WTC11 (cell line): ENCODE measurements at regions of chr1 and their contacts with region 1.

Region 1: GRCh38 chr1:211133836-211134669 is at the start of gene KCNH1:
- DNase-seq: peak; percentile 92
- ATAC-seq: peak; percentile 92
- H3K4me3 Mint-ChIP-seq: peak within 1 kb of the TSS; percentile 69
- H3K27ac Mint-ChIP-seq: no peak within 1 kb of the TSS
- H3K4me1 Mint-ChIP-seq: peaks cover 10% of the 10 kb centered on the region
- H3K27me3 Mint-ChIP-seq: peaks cover 35% of the 10 kb centered on the region
- CTCF ChIP-seq: peak; percentile 96
- total RNA-seq, gene KCNH1: 0.11 to 0.21 TPM (median 0.17 TPM) in 3 replicates

Region 2: GRCh38 chr1:210407207-210407886 is 726.7 kb before region 1 on chr1:
- CTCF ChIA-PET with region 1: interaction called, 33 read pairs
- POLR2A ChIA-PET with region 1: no interaction called
- DNase-seq: peak; percentile 81
- ATAC-seq: peak; percentile 70
- H3K4me3 Mint-ChIP-seq: 0 out of 2 replicates have a peak overlapping the region, but pooled peaks have one; percentile 16
- H3K27ac Mint-ChIP-seq: peak overlapping the region; percentile 92
- H3K4me1 Mint-ChIP-seq: peaks cover 26% of the 10 kb centered on the region
- H3K27me3 Mint-ChIP-seq: no peaks in the 10 kb centered on the region; the same call in 1 of the 2 replicates
- CTCF ChIP-seq: peak; percentile 92

Region 3: GRCh38 chr1:210448297-210448892 is 685.7 kb before region 1 on chr1:
- CTCF ChIA-PET with region 1: interaction called, 64 read pairs
- POLR2A ChIA-PET with region 1: no interaction called
- DNase-seq: no peak
- ATAC-seq: peak; percentile 87
- H3K4me3 Mint-ChIP-seq: no peak overlapping the region
- H3K27ac Mint-ChIP-seq: no peak overlapping the region
- H3K4me1 Mint-ChIP-seq: peaks cover 23% of the 10 kb centered on the region
- H3K27me3 Mint-ChIP-seq: no peaks in the 10 kb centered on the region
- CTCF ChIP-seq: peak; percentile 57; the same call in 1 of the 2 replicates

Region 4: DNA sequence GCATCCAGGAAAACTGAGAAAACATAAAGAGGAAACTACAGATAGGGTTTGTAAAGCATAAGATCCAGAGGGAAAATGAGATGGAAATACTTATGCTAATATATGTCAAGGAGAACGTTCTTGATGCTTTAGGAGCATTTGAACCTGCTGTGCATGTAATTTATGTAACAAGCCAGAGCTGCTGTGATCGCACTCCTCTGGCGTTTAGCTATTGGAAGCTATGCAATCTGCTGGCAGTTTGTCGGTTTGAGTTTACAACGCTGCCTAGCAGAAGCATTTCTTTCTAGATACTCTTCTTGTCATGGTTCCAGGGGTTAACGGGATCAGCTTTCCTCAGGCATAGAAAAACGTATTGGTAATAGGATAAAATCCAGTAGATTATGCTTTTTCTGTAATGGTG is 182.8 kb before region 1 on chr1:
- CTCF ChIA-PET with region 1: interaction called, 15 read pairs
- POLR2A ChIA-PET with region 1: no interaction called
- DNase-seq: no peak
- ATAC-seq: peak; percentile 20; the same call in 1 of the 2 replicates
- H3K4me3 Mint-ChIP-seq: no peak overlapping the region
- H3K27ac Mint-ChIP-seq: no peak overlapping the region
- H3K4me1 Mint-ChIP-seq: no peaks in the 10 kb centered on the region
- H3K27me3 Mint-ChIP-seq: no peaks in the 10 kb centered on the region; the same call in 1 of the 2 replicates
- CTCF ChIP-seq: no peak

Region 5: DNA sequence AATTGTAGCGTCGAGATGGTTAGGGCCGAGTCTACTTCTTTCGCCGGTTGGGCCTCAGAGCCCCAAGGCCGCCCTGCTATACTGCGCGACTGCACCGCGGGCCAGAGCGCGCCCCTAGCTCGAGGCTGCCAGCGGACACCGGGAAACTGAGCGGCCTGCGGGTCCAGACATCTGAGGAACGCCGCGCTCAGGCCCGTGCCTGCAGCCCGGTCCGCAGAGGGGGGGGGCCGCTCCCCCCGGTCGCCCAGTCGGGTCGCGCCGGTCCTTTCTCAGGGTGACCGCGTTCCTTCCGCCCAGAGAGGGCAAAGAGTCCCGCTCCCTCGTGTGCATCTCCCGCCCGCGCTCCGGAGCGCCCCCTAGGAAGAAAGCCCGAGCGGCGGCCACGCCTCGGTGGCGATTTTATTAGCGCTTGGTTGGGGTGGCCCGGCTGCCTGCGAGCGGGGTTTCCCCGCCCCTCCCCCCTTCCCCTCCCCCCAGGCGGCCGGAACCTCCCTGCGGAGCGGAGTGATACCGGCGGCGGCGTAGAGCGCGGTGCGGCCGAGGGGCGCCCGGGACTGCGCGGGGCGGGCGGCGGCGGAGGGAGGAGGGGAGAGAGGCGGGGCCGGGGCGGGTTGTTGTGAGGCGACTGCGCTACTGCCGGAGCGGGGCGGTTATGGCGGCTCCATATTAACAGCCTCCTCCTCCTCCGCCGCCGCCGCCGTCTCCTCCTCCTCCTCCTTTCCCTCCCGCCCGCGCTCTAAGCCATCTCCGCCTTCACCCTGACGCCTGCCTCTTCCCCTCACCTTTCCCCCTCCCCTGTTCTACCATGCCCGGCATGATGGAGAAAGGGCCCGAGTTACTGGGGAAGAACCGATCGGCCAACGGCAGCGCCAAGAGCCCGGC is 124.9 kb after region 1 on chr1 and contains the start of gene RCOR3:
- CTCF ChIA-PET with region 1: interaction called, 11 read pairs
- POLR2A ChIA-PET with region 1: interaction called, 3 read pairs
- DNase-seq: peak; percentile 94
- ATAC-seq: peak; percentile 71
- H3K4me3 Mint-ChIP-seq: peak within 1 kb of the TSS; percentile 81
- H3K27ac Mint-ChIP-seq: peak within 1 kb of the TSS; percentile 97
- H3K4me1 Mint-ChIP-seq: peaks cover 28% of the 10 kb centered on the region
- H3K27me3 Mint-ChIP-seq: no peaks in the 10 kb centered on the region
- CTCF ChIP-seq: peak; percentile 72
- total RNA-seq, gene RCOR3: 28.3 to 35.9 TPM (median 30.6 TPM) in 3 replicates